Transverse colon (tissue), 4 donors: ENCODE measurements at regions of chr1 and their contacts with region 1.

Region 1: DNA sequence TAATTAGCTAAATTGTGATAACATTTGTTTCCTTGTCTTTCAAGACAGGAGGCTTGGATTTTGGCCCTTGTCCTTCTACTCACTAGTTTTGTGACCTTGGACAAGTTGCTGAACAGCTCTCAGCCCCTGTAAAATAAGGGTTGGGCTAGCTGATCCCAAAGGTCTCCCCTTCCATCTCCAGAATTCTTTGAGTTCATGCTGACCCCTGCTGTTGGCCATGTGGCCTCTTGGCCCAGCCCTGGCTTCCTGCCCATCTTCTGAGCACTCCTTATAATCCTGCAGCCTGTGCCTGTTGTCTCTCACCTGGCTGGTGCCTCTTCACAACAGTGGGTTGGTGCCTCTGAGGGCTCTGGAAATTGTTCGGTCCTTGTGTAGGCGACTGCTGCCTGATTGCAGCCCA is 10.1 kb downstream of the PTGFRN start:
- DNase-seq: peak; percentile 38
- H3K4me3 ChIP-seq: no peak overlapping the region
- H3K27ac ChIP-seq: peak overlapping the region in 3 of 4 donors; percentile 23 to 46 (median 24)
- H3K4me1 ChIP-seq: peaks cover 24 to 70% (median 47%) of the 10 kb centered on the region in 4 donors
- H3K27me3 ChIP-seq: no peaks in the 10 kb centered on the region
- CTCF ChIP-seq: no peak
- EP300 ChIP-seq: no peak
- POLR2A ChIP-seq: no peak

Region 2: DNA sequence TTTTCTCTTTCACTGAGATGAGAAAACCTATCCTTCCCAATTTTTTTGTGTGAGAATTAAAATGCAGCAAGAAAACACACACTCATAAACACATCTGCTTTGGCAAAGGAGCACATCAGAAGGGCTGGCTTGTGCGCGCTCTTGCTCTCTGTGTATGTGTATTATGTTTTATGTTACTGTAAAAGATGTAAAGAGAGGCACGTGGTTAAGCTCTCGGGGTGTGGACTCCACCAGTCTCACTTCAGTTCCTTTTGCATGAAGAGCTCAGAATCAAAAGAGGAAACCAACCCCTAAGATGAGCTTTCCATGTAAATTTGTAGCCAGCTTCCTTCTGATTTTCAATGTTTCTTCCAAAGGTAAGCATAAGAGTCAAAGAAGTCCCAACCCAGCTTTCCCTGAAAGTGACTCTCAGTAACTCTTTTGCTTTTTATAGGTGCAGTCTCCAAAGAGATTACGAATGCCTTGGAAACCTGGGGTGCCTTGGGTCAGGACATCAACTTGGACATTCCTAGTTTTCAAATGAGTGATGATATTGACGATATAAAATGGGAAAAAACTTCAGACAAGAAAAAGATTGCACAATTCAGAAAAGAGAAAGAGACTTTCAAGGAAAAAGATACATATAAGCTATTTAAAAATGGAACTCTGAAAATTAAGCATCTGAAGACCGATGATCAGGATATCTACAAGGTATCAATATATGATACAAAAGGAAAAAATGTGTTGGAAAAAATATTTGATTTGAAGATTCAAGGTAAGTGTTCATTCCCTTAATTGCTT is 165.4 kb before region 1 on chr1 and contains the start of gene CD2:
- in situ Hi-C with region 1: no loop called
- intact Hi-C with region 1: no loop called
- DNase-seq: peak; percentile 29
- H3K4me3 ChIP-seq: peak within 1 kb of the TSS in 2 of 4 donors; percentile 10 to 29
- H3K27ac ChIP-seq: peak within 1 kb of the TSS; percentile 2 to 48 (median 38)
- H3K4me1 ChIP-seq: no peaks in the 10 kb centered on the region
- H3K27me3 ChIP-seq: no peaks in the 10 kb centered on the region
- CTCF ChIP-seq: no peak
- EP300 ChIP-seq: no peak
- POLR2A ChIP-seq: peak; percentile 60
- total RNA-seq, gene CD2: 5.0 to 8.7 (median 6.3) TPM in 3 of 4 donors, not detected in the other

Region 3: GRCh38 chr1:116987256-116987555 is 67.4 kb after region 1 on chr1:
- in situ Hi-C with region 1: no loop called
- intact Hi-C with region 1: loop called (anchors 5 kb)
- DNase-seq: peak; percentile 66
- H3K4me3 ChIP-seq: no peak overlapping the region
- H3K27ac ChIP-seq: peak overlapping the region in 3 of 4 donors; percentile 3 to 34 (median 17)
- H3K4me1 ChIP-seq: peaks cover 12 to 67% (median 41%) of the 10 kb centered on the region in 4 donors
- H3K27me3 ChIP-seq: no peaks in the 10 kb centered on the region
- CTCF ChIP-seq: no peak
- EP300 ChIP-seq: no peak
- POLR2A ChIP-seq: no peak